GM10248 (cell line): ENCODE measurements at regions of chr1 and their contacts with region 1.

Region 1: DNA sequence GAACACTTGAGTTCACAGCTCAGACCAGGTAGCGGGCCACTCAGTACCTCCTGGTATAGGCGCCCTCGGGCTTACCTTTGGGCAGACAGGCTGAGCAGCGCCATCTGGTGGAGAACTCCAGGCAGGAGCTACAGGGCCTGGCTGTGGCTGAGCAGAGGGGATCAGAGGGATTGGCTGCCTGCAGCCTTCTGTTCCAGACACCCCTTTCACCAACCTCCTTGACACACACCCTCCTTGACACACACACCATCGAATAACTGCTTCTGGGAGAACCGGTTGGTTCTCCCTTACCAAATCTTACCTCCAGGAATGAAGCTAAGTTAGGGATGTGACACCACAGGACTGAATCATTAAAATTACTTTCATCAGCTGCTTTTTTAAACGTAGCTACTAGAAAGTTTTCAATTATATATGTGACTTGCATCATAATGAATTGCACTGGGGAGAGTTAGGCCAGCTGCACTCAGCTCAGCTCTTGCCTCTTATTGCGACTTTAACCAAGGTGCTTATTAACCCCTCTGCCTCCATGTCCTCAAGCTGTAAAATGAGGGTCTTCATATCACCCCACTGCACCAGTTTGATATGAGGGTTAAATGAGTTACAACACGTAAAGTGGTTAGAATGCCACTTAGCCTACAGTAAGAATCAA is 6.6 kb downstream of the LIN28A start:
- DNase-seq: peak; percentile 85
- CTCF ChIP-seq: peak; percentile 99

Region 2: DNA sequence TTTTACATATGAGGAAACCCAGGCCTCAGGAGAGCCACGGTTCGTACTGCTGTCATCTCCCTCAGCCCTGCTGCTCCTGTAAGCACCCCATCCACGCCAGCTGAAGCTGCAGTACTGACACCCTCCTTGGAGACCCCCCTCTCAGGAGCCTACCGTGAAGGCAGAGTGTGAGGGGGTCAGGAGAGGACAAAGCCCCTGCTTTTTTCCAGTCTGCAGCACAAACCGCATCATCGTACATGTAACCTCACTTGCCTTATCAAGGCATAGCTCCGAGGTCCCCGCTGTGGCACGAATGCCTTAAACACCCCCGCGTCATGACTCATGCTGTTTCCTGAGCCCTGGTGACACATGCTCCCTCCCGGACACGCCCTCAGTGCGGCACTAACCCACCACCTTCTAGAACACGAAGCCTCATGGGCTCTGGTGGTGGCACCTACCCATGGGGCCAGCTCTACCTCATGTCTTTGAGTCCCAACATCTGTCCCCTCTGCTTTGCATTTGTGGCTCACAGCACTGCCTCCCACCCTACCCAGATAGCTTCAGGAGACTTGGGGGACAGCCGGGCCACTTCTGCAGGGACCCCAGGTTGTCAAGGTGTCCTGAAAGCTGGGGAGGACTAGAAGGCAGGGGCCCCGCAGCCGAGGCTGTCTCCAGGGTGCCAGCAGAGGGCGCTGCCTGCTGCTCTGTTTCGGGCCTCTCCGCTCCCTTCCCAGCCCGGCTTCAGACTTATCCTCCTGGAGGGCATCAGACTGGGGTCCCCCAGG is 132.5 kb before region 1 on chr1:
- CTCF ChIA-PET with region 1: interaction called, 52 read pairs
- POLR2A ChIA-PET with region 1: no interaction called
- DNase-seq: peak; percentile 80
- CTCF ChIP-seq: peak; percentile 89

Region 3: GRCh38 chr1:26363549-26364448 is 53.4 kb before region 1 on chr1:
- CTCF ChIA-PET with region 1: interaction called, 29 read pairs
- POLR2A ChIA-PET with region 1: no interaction called
- DNase-seq: peak; percentile 87
- CTCF ChIP-seq: peak; percentile 97

Region 4: DNA sequence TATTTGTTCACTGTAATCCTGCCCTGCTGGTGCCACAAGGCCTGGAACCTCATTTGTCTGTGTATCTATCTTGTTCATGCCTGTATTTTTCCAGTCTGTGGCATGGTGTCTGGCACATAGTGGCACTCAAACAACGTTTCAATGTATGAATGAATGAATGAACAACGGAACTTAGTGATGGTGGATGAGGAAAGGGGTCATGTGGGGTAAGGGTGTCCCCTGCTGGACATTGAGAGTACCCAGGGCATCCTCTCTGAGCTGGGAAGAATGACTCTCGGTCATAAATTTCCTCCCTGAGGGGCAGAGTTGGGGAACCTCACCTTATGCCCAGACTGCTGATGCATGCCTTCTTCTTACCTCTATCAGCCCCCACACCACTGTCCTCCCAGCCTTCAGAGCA is 25.8 kb before region 1 on chr1:
- CTCF ChIA-PET with region 1: interaction called, 41 read pairs
- POLR2A ChIA-PET with region 1: no interaction called
- DNase-seq: peak; percentile 56
- CTCF ChIP-seq: peak; percentile 45

Region 5: GRCh38 chr1:26431979-26432695 is 14.9 kb after region 1 on chr1 and contains the start of gene DHDDS:
- CTCF ChIA-PET with region 1: interaction called, 95 read pairs
- POLR2A ChIA-PET with region 1: no interaction called
- DNase-seq: peak; percentile 99
- CTCF ChIP-seq: no peak

Region 6: DNA sequence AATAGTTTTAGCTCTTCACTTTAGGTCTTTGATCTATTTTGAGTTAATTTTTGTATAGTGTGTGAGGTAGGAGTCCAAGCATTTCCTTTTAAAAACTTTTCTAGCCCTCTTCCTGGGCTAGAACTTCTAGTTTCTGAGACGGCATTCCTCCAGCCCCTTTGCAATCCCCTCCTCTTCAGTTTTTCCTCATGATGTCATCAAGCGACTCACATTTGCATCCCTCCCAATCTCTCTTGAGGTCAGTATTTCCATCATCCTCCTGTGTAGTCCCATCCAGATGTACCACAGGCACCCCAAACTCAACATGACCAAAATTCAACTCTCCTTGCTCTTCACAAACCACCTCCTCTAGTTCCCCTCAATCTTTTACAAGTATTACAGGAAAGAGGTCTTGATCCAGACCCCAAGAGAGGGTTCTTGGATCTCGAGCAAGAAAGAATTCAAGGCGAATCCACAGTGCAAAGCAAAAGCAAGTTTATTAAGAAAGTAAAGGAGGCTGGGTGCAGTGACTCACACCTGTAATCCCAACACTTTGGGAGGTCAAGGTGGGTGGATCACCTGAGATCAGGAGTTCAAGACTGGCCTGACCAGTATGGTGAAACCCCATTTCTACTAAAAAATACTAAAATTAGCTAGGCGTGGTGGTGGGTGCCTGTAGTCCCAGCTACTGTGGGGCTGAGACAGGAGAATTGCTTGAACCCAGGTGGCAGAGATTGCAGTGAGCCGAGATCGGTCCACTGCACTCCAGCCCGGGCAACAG is 65.9 kb after region 1 on chr1:
- CTCF ChIA-PET with region 1: no interaction called
- POLR2A ChIA-PET with region 1: no interaction called
- DNase-seq: no peak
- CTCF ChIP-seq: no peak